HCT116 (cell line): ENCODE measurements at regions of chr6 and their contacts with region 1.

Region 1: GRCh38 chr6:160534050-160534696 is 129.9 kb downstream of the LPA start:
- DNase-seq: peak; percentile 18
- ATAC-seq: peak; percentile 88
- H3K4me3 ChIP-seq: no peak overlapping the region
- H3K27ac ChIP-seq: no peak overlapping the region
- H3K4me1 ChIP-seq: no peaks in the 10 kb centered on the region
- H3K27me3 ChIP-seq: 0 out of 2 replicates have a peak, but pooled peaks cover 4% of the 10 kb centered on the region
- CTCF ChIP-seq: peak; percentile 53 to 91 (median 79); a peak in 5 of 6 replicates
- POLR2A ChIP-seq: no peak
- RAD21 ChIP-seq: peak; percentile 76

Region 2: GRCh38 chr6:160137989-160138835 is 396.0 kb before region 1 on chr6:
- CTCF ChIA-PET with region 1: no interaction called
- POLR2A ChIA-PET with region 1: no interaction called
- RAD21 ChIA-PET with region 1: no interaction called
- intact Hi-C with region 1: loop called (anchors 5 kb)
- DNase-seq: peak; percentile 32
- ATAC-seq: peak; percentile 61
- H3K4me3 ChIP-seq: no peak overlapping the region
- H3K27ac ChIP-seq: no peak overlapping the region
- H3K4me1 ChIP-seq: peaks cover 0 to 11% of the 10 kb centered on the region in 2 experiments; a peak in 1 of 4 replicates
- H3K27me3 ChIP-seq: no peaks in the 10 kb centered on the region
- CTCF ChIP-seq: peak in 2 of 3 experiments; percentile 70 to 71; a peak in 5 of 6 replicates
- POLR2A ChIP-seq: no peak
- RAD21 ChIP-seq: peak; percentile 82